Calu3 (cell line): ENCODE measurements at regions of chr10 and their contacts with region 1.

Region 1: DNA sequence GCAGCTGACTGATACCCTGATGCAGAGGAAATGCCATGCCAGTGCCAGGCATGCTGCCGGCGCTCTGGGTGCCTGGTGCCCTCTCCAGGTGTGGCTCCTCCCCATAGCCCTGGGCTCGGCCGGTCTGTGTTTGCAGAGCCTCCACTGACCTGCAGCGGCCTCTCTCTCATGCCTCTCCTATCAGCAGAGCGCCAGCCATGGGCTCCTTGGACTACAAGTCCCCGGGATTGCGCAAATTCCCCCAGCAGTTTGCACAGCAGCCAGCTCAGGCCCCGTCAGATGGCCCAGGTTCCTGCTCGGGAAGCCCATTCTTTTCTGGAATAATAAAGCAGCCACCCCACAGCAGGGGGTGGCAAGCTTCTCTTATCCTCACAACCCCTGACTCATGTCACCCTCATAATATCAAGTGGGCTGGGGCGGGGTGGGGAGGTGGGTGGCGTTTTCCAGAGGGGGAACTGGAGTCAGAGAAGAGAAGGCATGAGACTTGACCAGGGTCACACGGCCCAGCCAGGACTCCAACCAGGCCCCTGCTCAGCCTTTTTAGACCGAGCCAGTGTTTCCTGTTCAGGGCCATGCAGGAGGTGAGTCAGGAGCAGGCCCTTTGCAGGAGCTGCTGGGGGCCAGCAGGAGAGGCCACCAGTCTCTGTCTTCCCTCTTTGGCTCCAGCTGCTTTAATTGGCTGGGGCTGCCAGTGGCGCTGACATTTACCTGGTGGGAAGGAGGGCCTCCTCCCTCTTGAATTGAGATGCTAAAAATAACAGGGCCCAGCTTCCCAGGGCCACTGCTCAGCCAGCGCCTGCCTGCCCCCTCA is 58.6 kb downstream of the ZMIZ1 start:
- DNase-seq: peak; percentile 91
- H3K4me3 Mint-ChIP-seq: peak overlapping the region; percentile 7
- H3K27ac Mint-ChIP-seq: peak overlapping the region; percentile 10
- H3K4me1 Mint-ChIP-seq: peaks cover 42% of the 10 kb centered on the region
- H3K27me3 Mint-ChIP-seq: no peaks in the 10 kb centered on the region
- CTCF ChIP-seq: no peak

Region 2: GRCh38 chr10:79007421-79008319 is 119.7 kb before region 1 on chr10:
- CTCF ChIA-PET with region 1: no interaction called
- intact Hi-C with region 1: no loop called
- DNase-seq: no peak
- H3K4me3 Mint-ChIP-seq: no peak overlapping the region
- H3K27ac Mint-ChIP-seq: no peak overlapping the region
- H3K4me1 Mint-ChIP-seq: no peaks in the 10 kb centered on the region
- H3K27me3 Mint-ChIP-seq: peaks cover 57% of the 10 kb centered on the region
- CTCF ChIP-seq: no peak

Region 3: DNA sequence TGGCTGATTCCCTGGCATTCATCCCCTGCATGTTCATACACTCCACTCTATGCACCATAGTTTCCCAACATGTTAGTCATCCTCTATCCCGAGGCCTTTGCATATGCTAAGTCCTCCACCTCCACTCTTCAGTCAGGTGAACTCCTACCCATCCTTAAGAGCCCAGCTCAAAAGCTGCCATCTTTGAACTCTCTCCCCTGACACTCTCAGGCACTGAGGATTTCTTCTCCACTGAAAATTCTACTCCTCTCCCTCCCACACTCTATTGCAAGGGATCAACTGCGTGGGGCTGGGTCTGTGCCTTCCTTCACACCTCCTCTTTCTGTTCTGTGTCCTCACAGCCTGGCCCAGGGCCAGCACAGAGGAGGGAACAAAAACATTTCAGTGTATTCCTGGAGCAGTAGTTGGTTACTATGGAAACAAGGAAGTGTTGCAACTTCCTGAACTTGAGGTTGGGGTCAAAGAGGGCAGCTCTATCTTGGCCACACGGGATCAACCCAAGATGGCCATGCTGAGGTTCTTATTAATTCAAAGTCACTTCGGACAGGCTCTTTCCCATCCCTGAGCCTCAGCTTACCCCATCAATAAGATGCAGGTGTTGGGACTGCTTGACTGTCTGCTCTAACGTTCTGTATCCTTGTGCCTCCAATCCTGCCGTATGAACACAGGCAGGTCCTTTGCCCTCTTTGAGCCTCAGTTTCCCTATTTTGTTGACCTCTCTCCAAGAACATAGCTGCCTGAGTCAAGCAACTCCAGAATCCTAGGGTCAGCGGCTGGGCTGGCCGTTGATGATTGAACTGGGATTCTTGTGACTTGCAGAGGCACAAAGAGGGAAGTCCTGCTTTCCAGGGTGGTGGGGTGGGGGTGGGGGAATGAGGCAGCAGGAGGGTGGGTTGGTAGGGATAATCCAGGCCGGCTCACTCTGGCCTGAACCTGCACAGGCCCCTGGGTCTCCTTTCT is 43.1 kb before region 1 on chr10:
- CTCF ChIA-PET with region 1: interaction called, 3 read pairs
- intact Hi-C with region 1: loop called (anchors 5 kb)
- DNase-seq: peak; percentile 91
- H3K4me3 Mint-ChIP-seq: peak overlapping the region; percentile 26
- H3K27ac Mint-ChIP-seq: peak overlapping the region; percentile 83
- H3K4me1 Mint-ChIP-seq: peaks cover 65% of the 10 kb centered on the region
- H3K27me3 Mint-ChIP-seq: no peaks in the 10 kb centered on the region
- CTCF ChIP-seq: no peak

Region 4: GRCh38 chr10:79390551-79391209 is 263.3 kb after region 1 on chr10:
- CTCF ChIA-PET with region 1: no interaction called
- intact Hi-C with region 1: no loop called
- DNase-seq: no peak
- H3K4me3 Mint-ChIP-seq: no peak overlapping the region
- H3K27ac Mint-ChIP-seq: no peak overlapping the region
- H3K4me1 Mint-ChIP-seq: no peaks in the 10 kb centered on the region
- H3K27me3 Mint-ChIP-seq: peaks cover 35% of the 10 kb centered on the region
- CTCF ChIP-seq: no peak